ENCODE measurements at regions of chr2 and their contacts with region 1.

Region 1: GRCh38 chr2:108971661-108972566 is 17.1 kb downstream of the EDAR start:
- DNase-seq: no peak
- ATAC-seq: peak; percentile 55
- H3K4me3 ChIP-seq: no peak overlapping the region
- H3K4me3 Mint-ChIP-seq: peak overlapping the region; percentile 51
- H3K27ac ChIP-seq: no peak overlapping the region
- H3K27ac Mint-ChIP-seq: peak overlapping the region; percentile 45
- H3K4me1 ChIP-seq: peaks cover 53% of the 10 kb centered on the region
- H3K4me1 Mint-ChIP-seq: peaks cover 90% of the 10 kb centered on the region
- H3K27me3 ChIP-seq: no peaks in the 10 kb centered on the region
- H3K27me3 Mint-ChIP-seq: no peaks in the 10 kb centered on the region
- CTCF ChIP-seq: no peak

Region 2: GRCh38 chr2:108960006-108960405 is 11.9 kb before region 1 on chr2:
- CTCF ChIA-PET with region 1: interaction called, 5 read pairs
- POLR2A ChIA-PET with region 1: interaction called, 12 read pairs
- intact Hi-C with region 1: no loop called
- DNase-seq: no peak
- ATAC-seq: no peak
- H3K4me3 ChIP-seq: no peak overlapping the region
- H3K4me3 Mint-ChIP-seq: peak overlapping the region; percentile 25
- H3K27ac ChIP-seq: no peak overlapping the region
- H3K27ac Mint-ChIP-seq: peak overlapping the region; percentile 90
- H3K4me1 ChIP-seq: peaks cover 63% of the 10 kb centered on the region
- H3K4me1 Mint-ChIP-seq: peaks cover 85% of the 10 kb centered on the region
- H3K27me3 ChIP-seq: no peaks in the 10 kb centered on the region
- H3K27me3 Mint-ChIP-seq: no peaks in the 10 kb centered on the region
- CTCF ChIP-seq: no peak

Measured in CD4-positive, alpha-beta T cell (primary cell).